Sciatic nerve (tissue), 2 donors: ENCODE measurements at regions of chr10 and their contacts with region 1.

Region 1: GRCh38 chr10:14397066-14397465 is 66.3 kb upstream of the FRMD4A start:
- DNase-seq: peak; percentile 75
- ATAC-seq: peak; percentile 96

Region 2: GRCh38 chr10:13348216-13349017 is 1048.6 kb before region 1 on chr10 and contains the start of gene SEPHS1:
- intact Hi-C with region 1: no loop called
- DNase-seq: peak; percentile 82
- ATAC-seq: peak; percentile 67
- total RNA-seq, gene SEPHS1: 34.8 TPM

Region 3: GRCh38 chr10:14369906-14370305 is 27.2 kb before region 1 on chr10:
- intact Hi-C with region 1: loop called (anchors 1 kb)
- DNase-seq: no peak
- ATAC-seq: no peak